ENCODE measurements at regions of chr10 and their contacts with region 1.

Region 1: DNA sequence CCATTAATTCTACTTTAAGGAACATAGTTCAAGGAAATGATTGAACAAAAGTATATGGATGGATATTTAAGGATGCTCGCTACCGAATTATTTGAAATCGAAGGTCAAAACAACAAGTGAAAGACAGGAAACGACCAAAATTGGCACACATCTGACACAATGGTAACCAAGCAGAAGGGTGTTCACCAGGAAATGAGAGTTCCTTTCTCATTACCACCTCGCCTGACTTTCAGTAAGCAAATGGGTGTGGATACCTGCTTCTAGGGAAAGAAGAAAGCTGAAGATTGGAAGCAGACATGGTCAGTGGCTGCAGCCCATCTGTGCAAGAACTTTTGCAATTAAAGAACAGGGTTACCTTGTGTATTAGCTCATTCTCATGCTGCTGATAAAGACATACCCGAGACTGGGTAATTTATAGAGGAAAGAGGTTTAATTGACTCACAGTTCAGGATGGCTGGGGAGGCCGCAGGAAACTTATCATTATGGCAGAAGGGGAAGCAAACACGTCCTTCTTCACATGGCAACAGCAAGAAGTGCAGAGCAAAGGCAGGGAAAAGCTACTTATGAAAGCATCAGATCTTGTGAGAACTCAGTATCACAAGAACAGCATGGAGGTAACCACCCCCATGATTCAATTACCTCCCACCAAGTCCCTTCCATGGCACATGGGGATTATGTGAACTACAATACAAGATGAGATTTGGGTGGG is 6.2 kb upstream of the TMEM273 start:
- DNase-seq: no peak
- ATAC-seq: no peak
- H3K4me3 ChIP-seq: peak overlapping the region in 1 of 5 experiments; percentile 26
- H3K4me3 Mint-ChIP-seq: peak overlapping the region; percentile 60
- H3K27ac ChIP-seq: peak overlapping the region in 1 of 2 donors; percentile 68
- H3K27ac Mint-ChIP-seq: peak overlapping the region; percentile 91
- H3K4me1 ChIP-seq: peaks cover 29 to 34% of the 10 kb centered on the region in 2 donors
- H3K4me1 Mint-ChIP-seq: peaks cover 39% of the 10 kb centered on the region
- H3K27me3 ChIP-seq: peaks cover 0 to 5% (median 2%) of the 10 kb centered on the region in 4 experiments
- H3K27me3 Mint-ChIP-seq: peaks cover 8% of the 10 kb centered on the region
- CTCF ChIP-seq: no peak

Region 2: GRCh38 chr10:49183596-49184542 is 10.5 kb before region 1 on chr10:
- CTCF ChIA-PET with region 1: no interaction called
- POLR2A ChIA-PET with region 1: no interaction called
- intact Hi-C with region 1: no loop called
- DNase-seq: no peak
- ATAC-seq: peak; percentile 11
- H3K4me3 ChIP-seq: no peak overlapping the region
- H3K4me3 Mint-ChIP-seq: no peak overlapping the region
- H3K27ac ChIP-seq: peak overlapping the region in 1 of 2 donors; percentile 20
- H3K27ac Mint-ChIP-seq: peak overlapping the region; percentile 72
- H3K4me1 ChIP-seq: peaks cover 63 to 66% of the 10 kb centered on the region in 2 donors
- H3K4me1 Mint-ChIP-seq: peaks cover 83% of the 10 kb centered on the region
- H3K27me3 ChIP-seq: no peaks in the 10 kb centered on the region
- H3K27me3 Mint-ChIP-seq: no peaks in the 10 kb centered on the region
- CTCF ChIP-seq: no peak

Region 3: GRCh38 chr10:49309626-49310411 is 115.5 kb after region 1 on chr10:
- CTCF ChIA-PET with region 1: no interaction called
- POLR2A ChIA-PET with region 1: no interaction called
- intact Hi-C with region 1: loop called (anchors 5 kb)
- DNase-seq: peak; percentile 64
- ATAC-seq: peak; percentile 79
- H3K4me3 ChIP-seq: peak overlapping the region in 4 of 5 experiments; percentile 11 to 44 (median 26)
- H3K4me3 Mint-ChIP-seq: peak overlapping the region; percentile 72
- H3K27ac ChIP-seq: peak overlapping the region; percentile 42 to 70
- H3K27ac Mint-ChIP-seq: peak overlapping the region; percentile 81
- H3K4me1 ChIP-seq: peaks cover 18 to 25% of the 10 kb centered on the region in 2 donors
- H3K4me1 Mint-ChIP-seq: peaks cover 28% of the 10 kb centered on the region
- H3K27me3 ChIP-seq: no peaks in the 10 kb centered on the region
- H3K27me3 Mint-ChIP-seq: no peaks in the 10 kb centered on the region
- CTCF ChIP-seq: no peak

Measured in B cell (primary cell).